Caco-2 (cell line): ENCODE measurements at regions of chr16 and their contacts with region 1.

Region 1: GRCh38 chr16:25713785-25714580 is 22.2 kb downstream of the HS3ST4 start:
- DNase-seq: no peak
- H3K4me3 ChIP-seq: no peak overlapping the region
- H3K4me3 Mint-ChIP-seq: no peak overlapping the region
- H3K27ac Mint-ChIP-seq: no peak overlapping the region
- H3K4me1 ChIP-seq: no peaks in the 10 kb centered on the region
- H3K4me1 Mint-ChIP-seq: no peaks in the 10 kb centered on the region
- H3K27me3 ChIP-seq: no peaks in the 10 kb centered on the region
- H3K27me3 Mint-ChIP-seq: no peaks in the 10 kb centered on the region
- CTCF ChIP-seq: no peak

Region 2: DNA sequence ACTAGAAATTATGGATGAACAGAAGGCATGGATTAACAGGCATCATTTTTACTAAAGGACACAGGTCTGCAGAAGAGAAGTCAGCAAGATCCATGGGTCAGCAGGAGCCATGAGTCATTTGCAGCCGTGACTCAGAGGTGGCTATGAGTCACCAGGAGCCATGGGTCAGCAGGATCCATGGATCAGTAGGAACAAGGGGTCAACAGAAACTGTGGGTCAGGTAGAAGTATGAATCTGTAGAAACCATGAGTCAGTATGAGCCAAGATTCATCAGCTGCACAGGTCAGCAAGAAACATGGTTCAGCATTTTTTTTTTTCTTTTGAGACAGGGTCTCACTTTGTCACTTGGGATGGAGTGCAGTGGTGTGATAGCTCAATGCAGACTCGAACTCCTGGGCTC is 80.4 kb before region 1 on chr16:
- CTCF ChIA-PET with region 1: no interaction called
- POLR2A ChIA-PET with region 1: no interaction called
- intact Hi-C with region 1: no loop called
- DNase-seq: peak; percentile 6 to 47
- H3K4me3 ChIP-seq: no peak overlapping the region
- H3K4me3 Mint-ChIP-seq: no peak overlapping the region
- H3K27ac Mint-ChIP-seq: no peak overlapping the region
- H3K4me1 ChIP-seq: no peaks in the 10 kb centered on the region
- H3K4me1 Mint-ChIP-seq: no peaks in the 10 kb centered on the region
- H3K27me3 ChIP-seq: no peaks in the 10 kb centered on the region
- H3K27me3 Mint-ChIP-seq: no peaks in the 10 kb centered on the region
- CTCF ChIP-seq: no peak

Region 3: DNA sequence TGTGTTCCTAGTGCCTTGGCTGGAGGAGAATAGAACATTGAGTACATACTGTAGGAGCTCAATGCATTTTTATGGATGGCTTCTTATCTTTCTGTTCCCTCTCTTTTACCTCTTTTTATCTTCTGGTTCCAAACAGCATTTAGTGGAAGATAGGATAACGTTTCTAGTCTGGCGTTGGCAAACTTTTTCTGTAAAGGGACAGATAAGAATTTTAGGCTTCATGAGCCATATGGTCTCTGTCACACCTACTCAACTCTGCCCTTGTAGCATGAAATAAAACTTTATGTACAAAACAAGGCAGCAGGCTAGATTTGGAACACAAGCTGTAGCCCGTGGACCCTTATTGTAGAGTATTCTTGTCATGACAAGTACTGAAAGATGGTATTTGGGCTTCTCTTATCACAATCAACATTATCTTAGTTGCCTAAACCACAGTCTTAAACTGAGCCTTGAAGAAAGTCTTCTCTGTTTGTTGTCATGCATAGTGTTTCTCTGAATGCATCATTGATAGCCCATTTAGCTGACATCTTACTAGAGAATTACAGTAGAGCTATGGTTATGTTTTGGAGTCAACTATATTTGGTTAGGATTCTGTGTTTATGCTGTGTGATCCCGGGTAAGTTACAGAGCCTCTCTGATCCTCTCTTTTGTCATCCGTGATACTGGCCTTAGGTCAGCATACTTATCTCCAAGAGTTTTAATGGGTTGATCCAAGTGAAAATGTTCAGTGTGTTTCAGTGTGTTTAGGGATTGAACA is 58.0 kb after region 1 on chr16:
- CTCF ChIA-PET with region 1: no interaction called
- POLR2A ChIA-PET with region 1: no interaction called
- intact Hi-C with region 1: loop called (anchors 10 kb)
- DNase-seq: no peak
- H3K4me3 ChIP-seq: no peak overlapping the region
- H3K4me3 Mint-ChIP-seq: no peak overlapping the region
- H3K27ac Mint-ChIP-seq: no peak overlapping the region
- H3K4me1 ChIP-seq: no peaks in the 10 kb centered on the region
- H3K4me1 Mint-ChIP-seq: no peaks in the 10 kb centered on the region
- H3K27me3 ChIP-seq: no peaks in the 10 kb centered on the region; the same call in 1 of the 2 replicates
- H3K27me3 Mint-ChIP-seq: peaks cover 7% of the 10 kb centered on the region
- CTCF ChIP-seq: no peak

Region 4: DNA sequence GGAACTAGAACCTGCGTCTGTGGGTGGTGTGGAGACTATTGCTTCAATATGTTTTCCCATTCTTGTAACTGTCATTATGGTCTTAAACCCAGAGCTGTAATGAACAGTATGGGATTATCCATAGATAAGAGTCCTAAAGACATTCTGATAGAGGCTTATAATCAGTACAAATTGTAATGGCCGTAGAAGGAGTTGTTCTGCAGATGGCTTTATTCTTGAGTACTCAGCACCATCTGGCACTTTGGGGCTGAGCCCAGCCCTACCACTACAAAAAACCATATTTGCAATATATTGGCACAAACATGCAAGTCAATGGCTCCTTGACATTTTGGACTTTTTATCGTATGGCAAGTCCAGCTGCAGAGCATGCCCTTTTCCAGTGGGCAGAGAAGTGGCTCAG is 127.8 kb after region 1 on chr16:
- CTCF ChIA-PET with region 1: no interaction called
- POLR2A ChIA-PET with region 1: no interaction called
- intact Hi-C with region 1: no loop called
- DNase-seq: no peak
- H3K4me3 ChIP-seq: no peak overlapping the region
- H3K4me3 Mint-ChIP-seq: no peak overlapping the region
- H3K27ac Mint-ChIP-seq: no peak overlapping the region
- H3K4me1 ChIP-seq: no peaks in the 10 kb centered on the region
- H3K4me1 Mint-ChIP-seq: no peaks in the 10 kb centered on the region
- H3K27me3 ChIP-seq: no peaks in the 10 kb centered on the region
- H3K27me3 Mint-ChIP-seq: peaks cover 2% of the 10 kb centered on the region
- CTCF ChIP-seq: no peak